Ascending aorta (tissue), 2 donors: ENCODE measurements at regions of chr6 and their contacts with region 1.

Region 1: DNA sequence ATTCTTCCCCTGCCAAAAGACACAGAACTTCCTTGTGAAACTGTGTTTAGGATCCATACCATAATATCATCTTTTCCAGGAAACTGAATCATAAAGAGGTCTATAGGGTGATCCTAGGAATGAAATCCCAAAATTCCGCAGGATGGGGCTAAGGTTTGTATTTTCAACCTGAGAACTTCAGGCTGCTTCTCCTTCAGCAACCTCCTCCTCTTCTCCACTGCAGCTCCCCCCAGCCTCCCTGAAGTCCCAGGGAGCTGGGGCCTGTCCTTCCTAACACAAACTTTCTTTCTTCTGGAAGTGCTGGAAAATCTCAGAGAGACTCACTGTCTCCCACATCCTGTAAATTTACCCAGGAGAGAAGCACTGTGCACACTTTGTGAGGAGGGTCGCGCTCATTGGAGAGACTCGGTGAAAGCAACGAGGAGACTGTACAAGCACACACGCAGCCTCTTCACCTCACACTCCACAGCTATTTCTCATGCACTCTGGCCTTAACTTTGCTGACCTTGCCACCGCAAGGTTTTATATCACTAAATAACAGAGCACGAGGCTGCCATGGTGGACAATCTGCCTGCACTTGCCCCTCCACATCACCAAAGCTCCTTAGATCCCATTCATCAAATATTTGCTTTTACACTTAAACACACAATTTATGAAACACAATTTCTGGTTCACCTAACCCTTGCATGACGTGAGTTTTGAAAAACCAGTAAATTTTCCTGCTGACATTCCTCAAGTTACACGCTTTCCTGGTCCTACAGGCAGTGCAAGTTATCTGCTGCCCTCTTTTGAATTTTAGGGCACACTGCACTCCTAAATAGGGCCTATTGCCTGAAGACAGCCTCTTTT is 14.3 kb downstream of the ID4 start:
- DNase-seq: no peak
- H3K4me3 ChIP-seq: peak overlapping the region in 1 of 2 donors; percentile 48
- H3K27ac ChIP-seq: peak overlapping the region; percentile 76 to 89
- H3K4me1 ChIP-seq: peaks cover 5 to 15% of the 10 kb centered on the region in 2 donors
- H3K27me3 ChIP-seq: no peaks in the 10 kb centered on the region
- CTCF ChIP-seq: peak; percentile 75 to 97 (median 89)

Region 2: DNA sequence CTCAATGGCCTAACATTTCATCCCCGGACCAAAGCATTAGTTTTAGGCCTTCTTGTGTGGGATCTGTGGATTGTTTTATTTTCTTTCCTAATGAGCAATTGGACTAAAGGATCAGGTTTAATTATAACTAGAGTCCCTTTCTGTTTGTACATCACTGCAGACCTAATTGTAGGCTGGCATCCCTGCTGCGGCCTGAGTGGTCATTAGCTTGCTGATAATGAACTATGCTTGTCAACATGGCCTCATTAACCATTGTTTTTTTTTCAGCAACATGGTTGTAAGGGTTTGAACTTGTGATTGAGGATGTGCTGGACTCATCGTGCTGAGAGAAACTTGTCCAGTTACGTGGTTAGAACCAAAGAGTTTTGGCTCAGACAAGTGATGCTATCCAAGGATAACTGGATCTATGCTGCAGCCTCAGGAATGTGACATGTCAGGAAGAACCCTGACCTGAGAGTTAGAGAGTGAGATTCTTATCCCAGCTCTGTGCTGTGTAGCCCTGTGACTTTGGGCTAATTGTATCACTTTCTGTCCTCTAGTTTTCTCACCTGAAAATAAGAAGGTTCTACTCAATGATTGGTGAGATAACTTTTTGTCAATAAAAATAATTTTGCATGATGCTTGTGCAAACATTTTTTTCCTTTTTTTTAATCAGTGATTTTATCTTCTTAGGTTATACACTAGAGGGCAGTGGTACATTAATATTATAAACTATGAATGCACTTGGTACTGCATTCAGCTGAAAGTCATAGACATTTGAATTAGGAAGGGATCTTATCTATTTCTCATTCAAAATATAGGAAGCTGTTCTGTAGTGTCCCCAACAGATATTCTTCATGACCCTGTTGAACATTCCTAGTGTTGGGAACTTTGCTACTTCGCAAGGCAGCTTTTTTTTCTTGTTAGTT is 1323.4 kb before region 1 on chr6:
- intact Hi-C with region 1: loop called (anchors 10 kb)
- DNase-seq: no peak
- H3K4me3 ChIP-seq: no peak overlapping the region
- H3K27ac ChIP-seq: no peak overlapping the region
- H3K4me1 ChIP-seq: no peaks in the 10 kb centered on the region
- H3K27me3 ChIP-seq: no peaks in the 10 kb centered on the region
- CTCF ChIP-seq: peak in 2 of 3 experiments; percentile 6 to 47

Region 3: GRCh38 chr6:18595774-18596530 is 1255.5 kb before region 1 on chr6:
- intact Hi-C with region 1: loop called (anchors 5 kb)
- DNase-seq: peak in 1 of 2 donors; percentile 79
- H3K4me3 ChIP-seq: peak overlapping the region in 1 of 2 donors; percentile 51
- H3K27ac ChIP-seq: peak overlapping the region; percentile 56 to 65
- H3K4me1 ChIP-seq: no peaks in the 10 kb centered on the region
- H3K27me3 ChIP-seq: no peaks in the 10 kb centered on the region
- CTCF ChIP-seq: peak; percentile 72 to 93 (median 89)

Region 4: GRCh38 chr6:19024737-19025136 is 826.7 kb before region 1 on chr6:
- intact Hi-C with region 1: loop called (anchors 2 kb)
- DNase-seq: peak in 1 of 2 donors; percentile 63
- H3K4me3 ChIP-seq: no peak overlapping the region
- H3K27ac ChIP-seq: no peak overlapping the region
- H3K4me1 ChIP-seq: peaks cover 0 to 4% of the 10 kb centered on the region in 2 donors
- H3K27me3 ChIP-seq: no peaks in the 10 kb centered on the region
- CTCF ChIP-seq: peak; percentile 29 to 57 (median 48)

Region 5: DNA sequence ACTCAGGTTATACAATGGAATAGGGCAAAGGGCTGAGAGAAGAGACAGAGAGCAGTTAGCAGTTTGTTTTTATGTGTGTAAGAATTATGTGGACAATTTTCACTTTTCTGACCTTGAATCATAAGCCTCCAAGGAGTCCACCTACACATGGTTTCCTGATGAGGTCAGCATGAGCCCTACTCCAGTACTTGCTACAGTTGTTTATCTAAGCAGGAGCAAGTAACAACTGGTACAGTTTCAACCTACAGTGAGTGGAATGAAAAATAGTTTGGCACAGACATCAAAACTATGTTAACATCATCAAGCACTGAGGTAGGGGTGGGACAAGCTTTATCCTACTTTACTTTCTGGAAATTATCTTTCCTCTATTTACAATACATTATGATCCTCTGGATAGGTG is 441.0 kb before region 1 on chr6:
- intact Hi-C with region 1: loop called (anchors 5 kb)
- DNase-seq: no peak
- H3K4me3 ChIP-seq: no peak overlapping the region
- H3K27ac ChIP-seq: no peak overlapping the region
- H3K4me1 ChIP-seq: peaks cover 0 to 5% of the 10 kb centered on the region in 2 donors
- H3K27me3 ChIP-seq: no peaks in the 10 kb centered on the region
- CTCF ChIP-seq: no peak

Region 6: GRCh38 chr6:19812512-19813119 is 38.8 kb before region 1 on chr6:
- intact Hi-C with region 1: loop called (anchors 2 kb)
- DNase-seq: no peak
- H3K4me3 ChIP-seq: no peak overlapping the region
- H3K27ac ChIP-seq: no peak overlapping the region
- H3K4me1 ChIP-seq: no peaks in the 10 kb centered on the region
- H3K27me3 ChIP-seq: no peaks in the 10 kb centered on the region
- CTCF ChIP-seq: peak in 2 of 3 experiments; percentile 54 to 58

Region 7: DNA sequence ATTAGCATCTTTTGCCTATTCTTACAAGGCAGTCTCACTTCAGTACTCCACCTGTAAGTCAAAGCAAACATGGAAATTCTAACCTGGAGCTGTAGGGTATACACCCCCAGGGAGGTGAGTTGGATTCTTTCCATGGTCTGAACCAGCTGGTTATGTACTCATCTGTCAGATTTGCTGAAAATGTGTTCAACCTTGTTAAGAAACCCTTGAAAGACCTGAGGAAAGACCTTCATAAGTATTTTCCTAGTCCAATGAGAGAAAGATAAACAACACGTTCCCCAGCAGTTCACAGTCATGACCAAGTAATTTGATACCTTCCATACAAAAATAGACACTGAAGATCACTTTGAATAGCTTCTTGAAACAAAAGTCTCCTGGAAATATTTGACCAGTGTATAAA is 28.2 kb after region 1 on chr6:
- intact Hi-C with region 1: no loop called
- DNase-seq: no peak
- H3K4me3 ChIP-seq: no peak overlapping the region
- H3K27ac ChIP-seq: no peak overlapping the region
- H3K4me1 ChIP-seq: no peaks in the 10 kb centered on the region
- H3K27me3 ChIP-seq: no peaks in the 10 kb centered on the region
- CTCF ChIP-seq: no peak